GM23248 (cell line): ENCODE measurements at regions of chr2 and their contacts with region 1.

Region 1: DNA sequence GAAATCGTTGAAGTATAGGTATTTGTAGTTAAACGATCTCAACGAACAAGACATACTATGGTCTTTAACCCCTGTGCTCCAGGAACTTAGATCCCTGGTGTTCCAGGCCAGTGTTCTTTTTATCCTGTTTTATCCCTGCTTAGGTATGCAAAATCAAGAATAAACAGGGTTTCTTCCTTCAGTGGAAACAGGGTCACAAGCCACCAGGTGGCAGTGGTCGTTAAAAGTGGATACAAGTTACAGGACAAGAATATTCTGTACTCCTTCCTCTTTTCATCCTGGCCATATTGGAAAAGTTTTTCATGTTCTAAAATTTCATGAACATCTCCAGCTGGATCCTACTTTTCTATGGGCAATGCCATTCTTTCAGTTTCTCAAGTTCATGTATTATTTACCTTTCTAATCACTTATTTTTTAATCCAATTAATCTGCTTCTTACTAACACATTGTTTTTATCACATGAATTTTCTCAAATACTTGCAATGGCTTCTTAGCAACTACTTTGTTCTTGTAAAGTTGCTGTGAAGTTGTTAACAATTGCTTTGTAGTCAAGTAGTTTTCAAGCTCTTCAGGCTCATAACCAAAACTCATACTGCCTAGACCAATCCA is 16.4 kb upstream of the HNMT start:
- DNase-seq: peak; percentile 75
- H3K4me3 ChIP-seq: no peak overlapping the region
- H3K27ac ChIP-seq: no peak overlapping the region
- H3K4me1 ChIP-seq: peaks cover 10% of the 10 kb centered on the region
- H3K27me3 ChIP-seq: peaks cover 36% of the 10 kb centered on the region; the same call in 1 of the 2 replicates

Region 2: GRCh38 chr2:137521658-137522619 is 425.9 kb before region 1 on chr2:
- in situ Hi-C with region 1: no loop called
- DNase-seq: no peak
- H3K4me3 ChIP-seq: no peak overlapping the region
- H3K27ac ChIP-seq: no peak overlapping the region
- H3K4me1 ChIP-seq: no peaks in the 10 kb centered on the region
- H3K27me3 ChIP-seq: no peaks in the 10 kb centered on the region

Region 3: DNA sequence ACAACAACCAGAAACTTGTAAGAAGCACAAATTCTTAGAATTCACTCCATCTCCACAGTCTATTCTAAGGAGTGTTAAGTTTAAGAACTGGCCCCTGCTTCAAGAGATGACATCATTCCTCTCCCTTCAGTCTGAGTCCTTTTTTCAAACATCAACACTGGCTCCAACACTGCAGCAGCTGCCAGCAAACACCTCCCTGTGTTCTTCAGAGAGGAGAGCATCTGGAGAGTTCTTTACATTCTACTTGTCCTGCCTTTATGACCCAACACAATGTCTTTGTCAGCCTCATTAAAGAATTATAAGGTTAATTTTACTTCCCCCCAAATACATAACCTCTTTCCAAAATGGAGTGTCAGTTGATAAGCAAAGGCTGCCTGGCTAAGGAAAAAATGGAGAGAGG is 138.8 kb after region 1 on chr2:
- in situ Hi-C with region 1: loop called (anchors 10 kb)
- DNase-seq: peak; percentile 30
- H3K4me3 ChIP-seq: no peak overlapping the region
- H3K27ac ChIP-seq: no peak overlapping the region
- H3K4me1 ChIP-seq: peaks cover 14% of the 10 kb centered on the region
- H3K27me3 ChIP-seq: peaks cover 14% of the 10 kb centered on the region; the same call in 1 of the 2 replicates

Region 4: GRCh38 chr2:138373993-138374408 is 426.2 kb after region 1 on chr2:
- in situ Hi-C with region 1: loop called (anchors 25 kb)
- DNase-seq: peak; percentile 64
- H3K4me3 ChIP-seq: no peak overlapping the region
- H3K27ac ChIP-seq: no peak overlapping the region
- H3K4me1 ChIP-seq: no peaks in the 10 kb centered on the region
- H3K27me3 ChIP-seq: no peaks in the 10 kb centered on the region